ENCODE measurements at regions of chr1 and their contacts with region 1.

Region 1: DNA sequence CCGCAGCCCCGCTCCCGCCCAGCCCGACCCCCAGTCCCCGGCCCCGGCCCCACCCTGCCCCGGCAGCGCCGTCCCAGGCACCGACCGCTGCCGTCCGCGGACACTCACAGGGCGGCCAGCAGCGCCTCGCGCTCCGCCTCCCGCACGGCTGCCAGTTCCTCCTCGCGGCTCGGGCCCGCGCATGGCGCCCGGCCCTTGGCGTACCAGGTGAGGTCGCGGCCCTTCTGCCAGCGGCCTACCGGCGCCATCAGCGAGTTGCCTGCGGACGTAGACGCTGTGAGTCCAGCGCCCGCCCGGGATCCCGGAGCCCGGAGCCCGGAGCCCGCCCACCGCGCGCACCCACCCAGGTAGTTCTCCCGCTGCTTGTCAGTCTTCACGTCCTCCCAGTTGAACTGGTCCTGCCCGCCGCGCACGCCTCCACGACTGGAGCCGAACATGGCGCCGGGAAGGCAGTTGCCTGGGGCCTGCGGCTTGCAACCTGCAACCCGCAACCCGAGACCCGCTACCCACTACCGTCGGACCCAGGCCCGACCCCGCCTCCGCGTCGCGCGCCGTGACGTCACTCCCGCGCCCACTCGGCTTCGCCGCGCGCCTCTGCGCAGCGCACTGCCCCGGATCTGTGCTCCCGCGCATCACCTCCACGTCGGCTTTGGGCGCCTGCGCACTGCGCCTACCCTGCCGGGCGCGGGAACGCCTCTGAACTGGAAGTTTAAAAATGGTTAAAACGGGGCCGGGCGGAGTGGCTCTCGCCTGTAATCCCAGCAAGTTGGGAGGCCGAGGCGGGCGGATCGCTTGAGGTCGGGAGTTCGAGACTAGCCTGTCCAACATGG is at the start of gene C1orf35:
- DNase-seq: peak; percentile 90
- ATAC-seq: peak; percentile 87
- H3K4me3 Mint-ChIP-seq: peak within 1 kb of the TSS; percentile 94
- H3K27ac Mint-ChIP-seq: peak within 1 kb of the TSS; percentile 86
- H3K4me1 Mint-ChIP-seq: peaks cover 30% of the 10 kb centered on the region
- H3K27me3 Mint-ChIP-seq: no peaks in the 10 kb centered on the region
- CTCF ChIP-seq: no peak
- total RNA-seq, gene C1orf35: 11.9 and 13.3 TPM in 2 replicates

Region 2: GRCh38 chr1:227532019-227532619 is 570.9 kb before region 1 on chr1:
- CTCF ChIA-PET with region 1: no interaction called
- POLR2A ChIA-PET with region 1: no interaction called
- intact Hi-C with region 1: no loop called
- DNase-seq: no peak
- ATAC-seq: no peak
- H3K4me3 Mint-ChIP-seq: no peak overlapping the region
- H3K27ac Mint-ChIP-seq: no peak overlapping the region
- H3K4me1 Mint-ChIP-seq: no peaks in the 10 kb centered on the region
- H3K27me3 Mint-ChIP-seq: no peaks in the 10 kb centered on the region
- CTCF ChIP-seq: no peak

Region 3: DNA sequence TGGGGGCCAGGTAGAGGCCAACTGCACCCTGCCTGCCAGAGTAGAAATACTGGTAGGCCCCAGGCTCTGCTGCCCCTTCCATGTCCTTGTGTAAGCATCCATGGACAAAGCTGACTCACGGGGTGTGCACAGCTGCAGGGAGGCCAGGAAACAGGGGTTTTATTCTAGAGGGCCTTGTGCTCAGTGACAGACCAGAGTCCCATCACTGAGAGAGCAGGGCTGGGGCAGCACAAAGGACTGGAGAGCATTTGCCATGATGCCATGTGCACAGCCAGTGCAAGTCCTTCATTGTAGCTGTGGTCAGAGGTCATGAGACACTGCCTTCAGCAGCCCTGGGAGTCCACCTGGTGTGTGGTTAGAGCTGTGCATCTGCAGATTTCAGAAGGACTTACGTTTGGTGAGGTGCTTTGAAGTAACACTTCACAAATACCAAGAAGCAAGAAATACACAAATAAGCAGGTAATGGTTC is 12.4 kb before region 1 on chr1:
- CTCF ChIA-PET with region 1: no interaction called
- POLR2A ChIA-PET with region 1: interaction called, 6 read pairs
- intact Hi-C with region 1: loop called (anchors 1 kb)
- DNase-seq: peak; percentile 12
- ATAC-seq: no peak
- H3K4me3 Mint-ChIP-seq: peak overlapping the region; percentile 7
- H3K27ac Mint-ChIP-seq: peak overlapping the region; percentile 46
- H3K4me1 Mint-ChIP-seq: peaks cover 79% of the 10 kb centered on the region
- H3K27me3 Mint-ChIP-seq: no peaks in the 10 kb centered on the region
- CTCF ChIP-seq: no peak

Measured in activated B cell treated with CpG ODN at 0.5 μM for 24 hours (primary cell).